Activated CD4-positive, alpha-beta T cell treated with anti-CD3 and anti-CD28 coated beads for 36 hours (primary cell): ENCODE measurements at regions of chr17 and their contacts with region 1.

Region 1: DNA sequence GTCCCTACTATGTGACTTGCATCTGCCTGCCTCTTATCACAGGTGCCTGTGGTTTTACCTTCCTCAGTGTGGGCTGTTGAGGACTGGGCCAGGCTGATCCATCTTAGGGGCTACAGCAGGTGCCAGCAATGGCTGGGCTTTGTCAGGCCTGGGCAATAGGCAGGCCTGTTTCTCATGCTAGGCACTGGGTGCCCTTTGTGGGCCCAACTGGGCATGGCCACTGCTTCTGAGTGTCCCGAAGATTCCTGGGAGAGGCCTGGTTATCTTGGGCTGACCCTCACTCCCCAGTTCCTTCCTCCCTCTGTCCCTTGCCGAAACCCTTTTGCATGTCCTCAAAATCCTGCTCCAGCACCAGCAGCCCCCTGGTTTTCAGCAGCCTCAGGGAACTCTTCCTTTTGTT is 1024.9 kb downstream of the KCNJ18 start:
- DNase-seq: no peak
- ATAC-seq: no peak
- H3K4me3 Mint-ChIP-seq: no peak overlapping the region
- H3K27ac Mint-ChIP-seq: no peak overlapping the region
- H3K4me1 Mint-ChIP-seq: no peaks in the 10 kb centered on the region
- H3K27me3 Mint-ChIP-seq: no peaks in the 10 kb centered on the region

Region 2: DNA sequence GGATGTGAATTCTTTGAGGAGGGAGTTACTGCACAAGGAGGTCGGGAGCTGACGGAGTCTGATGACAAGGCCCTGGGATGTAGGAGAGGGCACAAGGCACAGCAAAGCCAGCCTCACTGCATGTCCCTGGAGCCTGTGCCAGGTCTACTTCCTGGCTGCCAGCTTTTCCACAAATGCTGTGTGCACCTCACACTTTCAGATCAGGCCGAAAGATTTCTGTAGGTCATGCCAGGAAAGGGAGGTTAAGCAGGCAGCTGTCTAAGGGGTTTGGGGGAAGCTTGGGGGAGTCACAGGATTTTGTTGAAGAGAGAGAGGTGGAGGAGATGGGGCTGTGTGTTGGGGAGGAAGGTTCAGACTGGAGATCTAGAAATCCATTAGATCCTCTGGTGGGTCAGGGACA is 232.4 kb before region 1 on chr17:
- CTCF ChIA-PET with region 1: no interaction called
- POLR2A ChIA-PET with region 1: no interaction called
- intact Hi-C with region 1: loop called in 1 of 2 experiments (anchors 5 kb)
- DNase-seq: no peak
- ATAC-seq: no peak
- H3K4me3 Mint-ChIP-seq: no peak overlapping the region
- H3K27ac Mint-ChIP-seq: no peak overlapping the region
- H3K4me1 Mint-ChIP-seq: no peaks in the 10 kb centered on the region
- H3K27me3 Mint-ChIP-seq: no peaks in the 10 kb centered on the region

Region 3: GRCh38 chr17:22669721-22670120 is 47.5 kb before region 1 on chr17:
- CTCF ChIA-PET with region 1: no interaction called
- POLR2A ChIA-PET with region 1: no interaction called
- intact Hi-C with region 1: no loop called
- DNase-seq: no peak
- ATAC-seq: no peak
- H3K4me3 Mint-ChIP-seq: no peak overlapping the region
- H3K27ac Mint-ChIP-seq: no peak overlapping the region
- H3K4me1 Mint-ChIP-seq: no peaks in the 10 kb centered on the region
- H3K27me3 Mint-ChIP-seq: no peaks in the 10 kb centered on the region

Region 4: GRCh38 chr17:22694362-22695227 is 22.6 kb before region 1 on chr17:
- CTCF ChIA-PET with region 1: no interaction called
- POLR2A ChIA-PET with region 1: no interaction called
- intact Hi-C with region 1: no loop called
- DNase-seq: peak; percentile 7
- ATAC-seq: no peak
- H3K4me3 Mint-ChIP-seq: no peak overlapping the region
- H3K27ac Mint-ChIP-seq: no peak overlapping the region
- H3K4me1 Mint-ChIP-seq: no peaks in the 10 kb centered on the region
- H3K27me3 Mint-ChIP-seq: no peaks in the 10 kb centered on the region